ENCODE measurements at regions of chr1 and their contacts with region 1.

Region 1: DNA sequence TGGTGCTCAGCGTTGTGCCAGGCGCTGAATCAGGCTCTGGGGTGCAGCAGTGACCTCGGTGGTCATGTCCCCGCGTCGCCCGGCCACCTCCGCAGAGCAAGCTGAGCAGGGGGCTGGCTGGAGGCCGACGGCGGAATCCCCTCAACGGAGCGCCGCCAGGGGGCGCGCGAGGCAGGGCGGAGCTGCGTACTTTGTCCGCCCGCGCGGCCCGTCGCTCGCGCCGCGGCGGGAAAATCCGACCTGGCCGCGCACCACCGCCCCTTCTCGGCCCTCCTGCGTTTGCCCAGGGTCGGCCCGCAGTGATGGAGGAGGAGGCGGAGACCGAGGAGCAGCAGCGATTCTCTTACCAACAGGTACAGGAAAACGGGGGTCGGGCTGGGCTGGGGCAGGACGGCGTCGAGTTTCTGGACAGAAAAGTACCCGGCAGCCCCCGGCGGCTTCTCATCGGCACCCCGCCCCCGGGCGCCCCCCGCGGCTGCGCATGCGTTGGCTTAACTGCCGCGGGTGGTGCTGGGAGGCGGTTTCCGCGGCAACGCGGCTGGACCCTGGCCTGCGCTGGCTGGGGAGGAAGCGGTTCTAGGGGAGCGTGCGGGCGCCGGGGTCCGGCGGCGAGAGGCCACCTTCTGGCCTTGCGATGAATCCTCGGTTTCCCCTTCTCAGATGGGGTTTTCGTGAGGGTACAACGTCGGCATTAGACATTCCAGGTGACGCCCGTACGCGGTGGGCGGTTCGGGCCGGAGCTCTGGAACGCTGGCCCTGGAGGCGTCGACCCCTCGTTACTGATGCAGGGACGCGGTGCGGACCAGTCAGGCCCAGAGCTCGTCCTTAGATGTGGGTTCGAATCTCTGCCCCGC is at the start of gene CENPS:
- DNase-seq: peak; percentile 82
- ATAC-seq: peak; percentile 92
- H3K4me3 ChIP-seq: peak within 1 kb of the TSS; percentile 63 to 79 (median 78)
- H3K27ac ChIP-seq: peak within 1 kb of the TSS; percentile 76
- H3K4me1 ChIP-seq: peaks cover 53% of the 10 kb centered on the region
- H3K27me3 ChIP-seq: no peaks in the 10 kb centered on the region
- CTCF ChIP-seq: peak; percentile 95
- EP300 ChIP-seq: peak; percentile 39 to 66; a peak in 2 of 4 replicates
- POLR2A ChIP-seq: peak; percentile 73 to 87
- RAD21 ChIP-seq: peak; percentile 96
- total RNA-seq, gene CENPS: 22.0 and 24.9 TPM in 2 replicates

Region 2: GRCh38 chr1:9555942-9556341 is 874.5 kb before region 1 on chr1:
- CTCF ChIA-PET with region 1: no interaction called
- POLR2A ChIA-PET with region 1: no interaction called
- in situ Hi-C with region 1: no loop called
- intact Hi-C with region 1: no loop called
- DNase-seq: no peak
- ATAC-seq: no peak
- H3K4me3 ChIP-seq: no peak overlapping the region
- H3K27ac ChIP-seq: peak overlapping the region; percentile 30
- H3K4me1 ChIP-seq: peaks cover 97% of the 10 kb centered on the region
- H3K27me3 ChIP-seq: no peaks in the 10 kb centered on the region
- CTCF ChIP-seq: no peak
- EP300 ChIP-seq: no peak
- POLR2A ChIP-seq: no peak
- RAD21 ChIP-seq: no peak

Region 3: GRCh38 chr1:10209905-10210810 is 220.3 kb before region 1 on chr1 and contains the start of gene KIF1B:
- CTCF ChIA-PET with region 1: no interaction called
- POLR2A ChIA-PET with region 1: no interaction called
- in situ Hi-C with region 1: no loop called
- intact Hi-C with region 1: loop called (anchors 2 kb)
- DNase-seq: peak; percentile 91
- ATAC-seq: peak; percentile 95
- H3K4me3 ChIP-seq: peak within 1 kb of the TSS; percentile 90 to 93 (median 91)
- H3K27ac ChIP-seq: peak within 1 kb of the TSS; percentile 86
- H3K4me1 ChIP-seq: peaks cover 44% of the 10 kb centered on the region
- H3K27me3 ChIP-seq: no peaks in the 10 kb centered on the region; a peak in 1 of 5 replicates
- CTCF ChIP-seq: peak; percentile 94
- EP300 ChIP-seq: no peak
- POLR2A ChIP-seq: peak; percentile 86 to 93
- RAD21 ChIP-seq: peak; percentile 88
- total RNA-seq, gene KIF1B: 26.7 and 43.6 TPM in 2 replicates

Region 4: GRCh38 chr1:10378081-10378841 is 52.2 kb before region 1 on chr1:
- CTCF ChIA-PET with region 1: interaction called, 46 read pairs
- POLR2A ChIA-PET with region 1: interaction called, 5 read pairs
- in situ Hi-C with region 1: loop called (anchors 5 kb)
- intact Hi-C with region 1: loop called (anchors 1 kb)
- DNase-seq: no peak
- ATAC-seq: no peak
- H3K4me3 ChIP-seq: no peak overlapping the region
- H3K27ac ChIP-seq: no peak overlapping the region
- H3K4me1 ChIP-seq: peaks cover 11% of the 10 kb centered on the region; the same call in 1 of the 2 replicates
- H3K27me3 ChIP-seq: no peaks in the 10 kb centered on the region
- CTCF ChIP-seq: no peak
- EP300 ChIP-seq: no peak
- POLR2A ChIP-seq: no peak
- RAD21 ChIP-seq: no peak

Region 5: DNA sequence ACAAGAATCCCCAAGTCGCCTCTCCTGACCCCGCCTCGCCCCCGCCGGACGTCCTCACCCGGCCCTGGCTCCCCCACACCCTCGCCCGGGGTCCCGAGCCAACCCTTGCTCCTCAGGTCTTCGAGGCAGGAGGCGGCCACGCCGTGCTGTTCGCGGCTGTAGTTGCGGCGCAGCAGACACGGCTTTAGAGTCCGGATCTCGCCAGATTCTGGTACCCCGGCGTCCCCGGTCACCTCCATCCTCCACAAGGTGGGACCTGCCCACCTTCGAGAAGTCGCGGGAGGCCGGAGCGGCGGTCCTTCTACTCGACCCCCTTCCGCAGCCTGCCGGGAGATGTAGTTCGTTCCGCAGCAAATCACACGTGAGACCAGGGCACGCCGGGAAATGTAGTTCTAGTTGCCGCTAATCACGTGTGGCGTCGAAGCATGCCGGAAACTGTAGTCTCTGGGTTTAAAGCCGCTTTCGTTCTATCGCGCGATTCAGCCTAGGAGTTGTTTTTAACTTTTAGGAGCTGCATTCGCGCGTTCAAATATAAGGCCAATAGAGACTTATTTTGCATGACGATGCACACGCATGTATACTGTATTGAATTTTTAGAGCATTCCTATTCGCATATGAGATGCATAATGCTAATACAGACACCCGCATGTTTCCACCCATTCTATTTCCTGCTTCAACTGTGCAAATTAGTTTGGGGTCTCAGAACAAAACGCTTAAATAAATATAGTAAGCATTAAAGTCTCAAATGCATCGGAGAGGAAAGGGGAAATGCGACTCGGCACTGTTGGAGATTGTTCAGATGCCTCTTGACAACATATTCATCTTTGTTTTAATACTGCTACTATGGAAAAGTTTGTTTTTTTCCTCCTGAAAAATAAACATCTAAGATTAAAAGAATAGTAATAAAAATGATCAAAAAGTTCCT is 42.0 kb after region 1 on chr1 and contains the start of gene DFFA:
- CTCF ChIA-PET with region 1: interaction called, 3 read pairs
- POLR2A ChIA-PET with region 1: interaction called, 4 read pairs
- in situ Hi-C with region 1: no loop called
- intact Hi-C with region 1: loop called (anchors 5 kb)
- DNase-seq: peak; percentile 95
- ATAC-seq: peak; percentile 86
- H3K4me3 ChIP-seq: peak within 1 kb of the TSS; percentile 74 to 83 (median 77)
- H3K27ac ChIP-seq: peak within 1 kb of the TSS; percentile 70
- H3K4me1 ChIP-seq: peaks cover 43% of the 10 kb centered on the region
- H3K27me3 ChIP-seq: no peaks in the 10 kb centered on the region; a peak in 1 of 5 replicates
- CTCF ChIP-seq: peak; percentile 40; the same call in 1 of the 2 replicates
- EP300 ChIP-seq: no peak
- POLR2A ChIP-seq: peak; percentile 66 to 78; a peak in 3 of 4 replicates
- RAD21 ChIP-seq: no peak; the same call in 1 of the 2 replicates
- total RNA-seq, gene DFFA: 33.9 and 44.6 TPM in 2 replicates

Region 6: GRCh38 chr1:10494754-10495474 is 64.5 kb after region 1 on chr1:
- CTCF ChIA-PET with region 1: interaction called, 23 read pairs
- POLR2A ChIA-PET with region 1: interaction called, 5 read pairs
- in situ Hi-C with region 1: loop called (anchors 5 kb)
- intact Hi-C with region 1: loop called (anchors 1 kb)
- DNase-seq: peak; percentile 40
- ATAC-seq: peak; percentile 91
- H3K4me3 ChIP-seq: no peak overlapping the region
- H3K27ac ChIP-seq: no peak overlapping the region
- H3K4me1 ChIP-seq: peaks cover 19% of the 10 kb centered on the region
- H3K27me3 ChIP-seq: no peaks in the 10 kb centered on the region
- CTCF ChIP-seq: peak; percentile 87
- EP300 ChIP-seq: no peak
- POLR2A ChIP-seq: no peak
- RAD21 ChIP-seq: peak; percentile 73

Measured in HepG2 (cell line).